ENCODE measurements at regions of chr9 and their contacts with region 1.

Region 1: DNA sequence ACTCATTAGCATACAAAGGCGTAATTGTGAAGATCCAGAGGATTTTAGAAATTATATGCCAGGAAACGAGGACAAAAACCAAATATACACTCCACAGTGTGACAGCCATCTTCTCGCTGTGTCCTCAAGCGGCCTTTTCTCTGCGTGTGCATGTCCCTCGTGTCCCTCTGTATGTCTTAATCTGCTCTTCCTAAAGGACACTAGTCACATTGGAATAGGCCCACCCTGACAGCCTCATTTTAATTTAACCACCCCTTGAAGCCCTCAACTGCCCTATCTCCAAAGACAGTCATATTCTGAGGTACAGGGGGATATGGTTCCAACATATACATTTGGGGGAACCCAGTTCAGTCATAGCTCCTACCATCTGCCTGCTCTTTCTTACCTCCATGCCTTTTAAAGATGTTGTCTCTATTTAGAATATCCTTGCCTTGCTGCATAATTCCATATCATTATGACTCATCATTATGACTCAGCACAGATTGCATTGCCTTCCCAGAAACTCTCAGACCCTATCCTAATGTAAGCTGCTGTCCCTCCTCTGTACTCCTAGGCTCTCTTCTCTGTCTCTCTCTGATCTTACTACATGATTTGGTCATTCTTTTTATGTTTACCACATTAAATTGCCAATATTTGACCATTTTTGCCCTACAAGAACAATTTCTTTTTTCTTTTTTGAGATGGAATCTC is 210.9 kb downstream of the AOPEP start:
- DNase-seq: no peak
- H3K4me3 ChIP-seq: no peak overlapping the region
- H3K27ac ChIP-seq: peak overlapping the region in 3 of 4 donors; percentile 2 to 51 (median 46)
- H3K4me1 ChIP-seq: peaks cover 10 to 29% (median 19%) of the 10 kb centered on the region in 3 donors
- H3K27me3 ChIP-seq: no peaks in the 10 kb centered on the region
- CTCF ChIP-seq: no peak
- POLR2A ChIP-seq: no peak

Region 2: DNA sequence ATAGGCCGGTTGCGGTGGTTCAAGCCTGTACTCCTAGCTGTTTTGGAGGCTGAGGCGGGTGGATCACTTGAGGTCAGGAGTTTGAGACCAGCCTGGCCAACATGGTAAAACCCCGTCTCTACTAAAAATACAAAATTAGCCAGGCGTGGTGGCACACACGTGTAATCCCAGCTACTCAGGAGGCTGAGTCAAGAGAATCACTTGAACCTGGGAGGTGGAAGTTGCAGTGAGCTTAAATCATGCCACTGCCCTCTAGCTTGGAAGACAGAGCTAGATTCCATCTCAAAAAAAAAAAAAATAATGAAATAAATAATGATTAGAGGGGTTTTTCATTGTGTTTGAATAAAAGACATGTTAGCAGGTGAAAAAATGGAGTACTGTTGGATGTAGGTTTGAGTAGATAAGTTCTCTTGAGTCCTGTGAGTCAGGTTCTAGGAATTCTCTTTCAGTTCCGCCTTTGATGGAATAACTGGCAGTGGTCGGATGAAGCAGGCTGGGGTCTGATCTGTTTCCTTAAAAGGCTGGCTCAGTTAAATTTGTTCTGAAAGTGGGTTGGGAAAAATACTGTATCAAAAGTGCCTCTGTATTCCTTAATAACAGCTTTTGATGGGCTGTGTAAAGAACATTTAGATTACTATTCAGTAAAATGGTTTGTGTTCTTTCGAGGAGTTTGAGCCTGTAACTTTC is 137.6 kb before region 1 on chr9:
- intact Hi-C with region 1: loop called (anchors 10 kb)
- DNase-seq: no peak
- H3K4me3 ChIP-seq: no peak overlapping the region
- H3K27ac ChIP-seq: peak overlapping the region; percentile 57 to 89 (median 86)
- H3K4me1 ChIP-seq: peaks cover 24 to 84% (median 63%) of the 10 kb centered on the region in 3 donors
- H3K27me3 ChIP-seq: no peaks in the 10 kb centered on the region
- CTCF ChIP-seq: no peak
- POLR2A ChIP-seq: no peak